Gastrocnemius medialis (tissue), 4 donors: ENCODE measurements at regions of chr22 and their contacts with region 1.

Region 1: GRCh38 chr22:33379836-33380235 is 321.7 kb upstream of the SYN3 start:
- DNase-seq: no peak
- ATAC-seq: no peak
- H3K4me3 ChIP-seq: no peak overlapping the region
- H3K27ac ChIP-seq: no peak overlapping the region
- H3K4me1 ChIP-seq: no peaks in the 10 kb centered on the region
- H3K27me3 ChIP-seq: no peaks in the 10 kb centered on the region
- CTCF ChIP-seq: no peak
- POLR2A ChIP-seq: no peak

Region 2: GRCh38 chr22:33314316-33314715 is 65.5 kb before region 1 on chr22:
- in situ Hi-C with region 1: loop called in 1 of 4 experiments (anchors 10 kb)
- intact Hi-C with region 1: no loop called
- DNase-seq: no peak
- ATAC-seq: no peak
- H3K4me3 ChIP-seq: no peak overlapping the region
- H3K27ac ChIP-seq: no peak overlapping the region
- H3K4me1 ChIP-seq: no peaks in the 10 kb centered on the region
- H3K27me3 ChIP-seq: no peaks in the 10 kb centered on the region
- CTCF ChIP-seq: no peak
- POLR2A ChIP-seq: no peak